Activated naive CD4-positive, alpha-beta T cell treated with anti-CD3 and anti-CD28 coated beads for 36 hours (primary cell): ENCODE measurements at regions of chr17 and their contacts with region 1.

Region 1: GRCh38 chr17:49677933-49678847 is at the start of gene SPOP:
- DNase-seq: peak; percentile 100
- H3K4me3 Mint-ChIP-seq: peak within 1 kb of the TSS; percentile 93
- H3K27ac Mint-ChIP-seq: peak within 1 kb of the TSS; percentile 95
- H3K4me1 Mint-ChIP-seq: peaks cover 38% of the 10 kb centered on the region
- H3K27me3 Mint-ChIP-seq: no peaks in the 10 kb centered on the region
- total RNA-seq, gene SPOP: 66.9 to 69.2 TPM

Region 2: DNA sequence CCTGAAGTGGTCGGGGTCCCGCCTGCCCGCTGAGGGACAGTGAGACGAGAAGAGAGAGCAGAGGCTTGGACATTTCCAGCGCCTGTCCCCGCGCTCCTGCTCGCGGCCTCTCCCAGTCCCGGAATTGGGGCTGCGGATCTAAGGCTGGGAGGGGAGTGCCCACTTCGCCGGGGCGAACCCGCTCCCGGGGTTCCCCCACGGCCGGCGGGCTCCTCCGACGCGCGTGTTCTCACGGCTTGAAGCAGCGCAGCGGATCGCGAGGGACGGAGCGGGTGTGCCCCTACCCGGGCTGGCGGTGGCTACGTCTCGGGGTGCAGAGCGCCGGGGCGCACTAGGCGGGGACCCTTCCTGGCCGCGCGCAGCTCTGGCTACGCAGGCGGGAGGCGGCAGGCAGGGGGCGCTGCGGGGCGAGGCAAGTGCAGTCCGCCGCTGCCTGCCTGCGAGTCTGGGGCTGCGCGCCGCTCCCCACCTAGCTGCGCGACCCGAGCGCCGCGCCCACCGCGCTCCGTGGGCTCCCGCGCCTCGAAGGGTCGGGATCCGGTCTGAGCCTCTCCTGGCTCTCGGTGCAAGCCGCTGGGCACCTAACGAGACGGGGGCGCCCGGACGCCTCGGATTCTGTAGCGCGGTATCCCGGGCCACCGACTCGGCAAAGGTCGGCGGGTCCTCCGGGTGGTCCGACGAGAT is 181.9 kb before region 1 on chr17:
- CTCF ChIA-PET with region 1: no interaction called
- intact Hi-C with region 1: no loop called
- DNase-seq: peak; percentile 84
- H3K4me3 Mint-ChIP-seq: peak overlapping the region; percentile 65
- H3K27ac Mint-ChIP-seq: no peak overlapping the region
- H3K4me1 Mint-ChIP-seq: peaks cover 19% of the 10 kb centered on the region
- H3K27me3 Mint-ChIP-seq: peaks cover 53% of the 10 kb centered on the region

Region 3: GRCh38 chr17:49567871-49568694 is 110.1 kb before region 1 on chr17:
- CTCF ChIA-PET with region 1: interaction called, 4 read pairs
- intact Hi-C with region 1: loop called (anchors 1 kb)
- DNase-seq: peak; percentile 89
- H3K4me3 Mint-ChIP-seq: peak overlapping the region; percentile 74
- H3K27ac Mint-ChIP-seq: no peak overlapping the region
- H3K4me1 Mint-ChIP-seq: peaks cover 15% of the 10 kb centered on the region
- H3K27me3 Mint-ChIP-seq: peaks cover 8% of the 10 kb centered on the region

Region 4: GRCh38 chr17:49637050-49637449 is 41.1 kb before region 1 on chr17:
- CTCF ChIA-PET with region 1: interaction called, 3 read pairs
- intact Hi-C with region 1: loop called (anchors 5 kb)
- DNase-seq: no peak
- H3K4me3 Mint-ChIP-seq: no peak overlapping the region
- H3K27ac Mint-ChIP-seq: peak overlapping the region; percentile 77
- H3K4me1 Mint-ChIP-seq: peaks cover 59% of the 10 kb centered on the region
- H3K27me3 Mint-ChIP-seq: no peaks in the 10 kb centered on the region

Region 5: DNA sequence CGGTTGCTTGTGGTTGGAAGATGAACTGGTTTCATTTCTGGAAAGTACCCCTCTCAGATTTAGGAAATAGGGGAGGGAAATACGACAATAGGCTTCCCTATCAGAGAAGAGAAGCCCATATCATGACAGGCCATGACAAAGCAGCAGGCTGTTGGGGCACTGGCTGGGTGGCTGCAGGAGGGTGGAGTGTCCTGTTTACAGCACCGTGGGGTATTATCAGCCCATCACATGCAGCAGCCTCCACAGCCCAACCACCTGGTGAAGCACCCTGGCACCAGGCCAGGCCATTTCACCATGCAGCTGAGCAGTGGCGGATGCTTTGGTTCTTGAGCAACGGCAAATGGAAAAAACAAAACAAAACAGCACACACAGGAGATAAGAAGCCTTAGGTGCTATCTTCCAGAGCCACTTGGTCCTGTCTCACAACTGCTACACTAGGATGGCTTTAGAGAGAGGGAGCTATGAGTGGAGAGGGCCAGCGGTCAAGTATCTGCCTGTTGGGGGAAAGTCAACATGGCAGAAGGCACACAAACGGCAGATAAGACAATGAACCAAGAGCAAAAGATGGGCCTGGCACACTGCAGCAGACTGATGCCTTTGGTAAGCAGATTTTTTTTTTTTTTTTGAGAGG is 61.6 kb after region 1 on chr17:
- CTCF ChIA-PET with region 1: no interaction called
- intact Hi-C with region 1: loop called (anchors 2 kb)
- DNase-seq: peak; percentile 92
- H3K4me3 Mint-ChIP-seq: peak overlapping the region; percentile 84
- H3K27ac Mint-ChIP-seq: peak overlapping the region; percentile 99
- H3K4me1 Mint-ChIP-seq: peaks cover 73% of the 10 kb centered on the region
- H3K27me3 Mint-ChIP-seq: no peaks in the 10 kb centered on the region

Region 6: GRCh38 chr17:49788478-49789242 is 110.5 kb after region 1 on chr17 and contains the start of gene KAT7:
- CTCF ChIA-PET with region 1: no interaction called
- intact Hi-C with region 1: loop called (anchors 1 kb)
- DNase-seq: peak; percentile 99
- H3K4me3 Mint-ChIP-seq: peak within 1 kb of the TSS; percentile 92
- H3K27ac Mint-ChIP-seq: peak within 1 kb of the TSS; percentile 95
- H3K4me1 Mint-ChIP-seq: peaks cover 51% of the 10 kb centered on the region
- H3K27me3 Mint-ChIP-seq: no peaks in the 10 kb centered on the region
- total RNA-seq, gene KAT7: 83.9 to 85.8 TPM